Right ventricle myocardium inferior (tissue), 1 donor: ENCODE measurements at regions of chr19 and their contacts with region 1.

Region 1: GRCh38 chr19:633068-633785 is at the start of gene POLRMT:
- DNase-seq: peak; percentile 98
- ATAC-seq: peak; percentile 98
- total RNA-seq, gene POLRMT: 51.2 TPM

Region 2: GRCh38 chr19:531009-531752 is 102.0 kb before region 1 on chr19:
- intact Hi-C with region 1: loop called (anchors 5 kb)
- DNase-seq: peak; percentile 93
- ATAC-seq: peak; percentile 84